ENCODE measurements at regions of chr6 and their contacts with region 1.

Region 1: DNA sequence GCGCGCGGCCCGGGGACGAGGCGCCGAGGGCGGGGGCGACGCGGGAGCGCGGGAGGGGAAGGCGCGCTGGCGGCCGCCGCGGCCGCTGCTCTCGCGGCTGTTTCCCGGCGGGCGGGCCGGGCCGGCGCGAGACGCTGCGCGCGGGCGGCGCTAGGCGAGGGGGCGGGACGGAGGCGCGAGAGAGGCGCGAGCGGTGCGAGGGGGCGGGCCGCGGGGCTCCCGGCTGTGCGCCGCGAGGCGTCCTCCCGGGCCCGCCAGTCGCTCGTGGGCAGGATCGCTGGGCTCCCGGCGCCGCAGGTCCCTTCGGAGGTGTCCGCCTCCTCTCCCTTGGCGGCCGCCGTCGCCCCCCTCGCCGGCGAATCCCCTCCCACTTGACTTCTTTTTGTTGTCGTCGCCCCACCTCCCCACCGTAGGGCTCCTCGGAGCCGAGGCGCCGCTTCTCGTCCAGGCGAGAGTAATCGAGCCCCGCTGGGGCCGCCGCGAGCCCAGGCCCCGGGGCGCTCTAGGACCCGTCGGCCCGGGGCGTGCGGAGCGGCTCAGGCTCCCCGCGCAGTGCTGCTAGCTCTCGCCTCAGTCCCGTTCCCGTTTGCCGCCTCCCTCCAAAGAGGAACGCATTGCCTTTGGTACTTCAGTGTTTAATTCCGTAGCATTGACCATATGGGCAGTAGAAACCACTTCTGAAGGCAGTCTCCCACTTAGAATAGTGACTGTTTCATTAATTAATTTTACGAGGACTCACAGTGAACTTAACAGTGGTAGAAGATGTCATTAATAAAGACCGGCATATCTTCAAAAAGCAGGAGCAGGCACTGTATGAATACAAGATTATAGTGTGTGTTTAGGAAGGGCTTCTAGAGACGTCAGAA is at the start of gene RANBP9:
- DNase-seq: peak; percentile 84

Region 2: DNA sequence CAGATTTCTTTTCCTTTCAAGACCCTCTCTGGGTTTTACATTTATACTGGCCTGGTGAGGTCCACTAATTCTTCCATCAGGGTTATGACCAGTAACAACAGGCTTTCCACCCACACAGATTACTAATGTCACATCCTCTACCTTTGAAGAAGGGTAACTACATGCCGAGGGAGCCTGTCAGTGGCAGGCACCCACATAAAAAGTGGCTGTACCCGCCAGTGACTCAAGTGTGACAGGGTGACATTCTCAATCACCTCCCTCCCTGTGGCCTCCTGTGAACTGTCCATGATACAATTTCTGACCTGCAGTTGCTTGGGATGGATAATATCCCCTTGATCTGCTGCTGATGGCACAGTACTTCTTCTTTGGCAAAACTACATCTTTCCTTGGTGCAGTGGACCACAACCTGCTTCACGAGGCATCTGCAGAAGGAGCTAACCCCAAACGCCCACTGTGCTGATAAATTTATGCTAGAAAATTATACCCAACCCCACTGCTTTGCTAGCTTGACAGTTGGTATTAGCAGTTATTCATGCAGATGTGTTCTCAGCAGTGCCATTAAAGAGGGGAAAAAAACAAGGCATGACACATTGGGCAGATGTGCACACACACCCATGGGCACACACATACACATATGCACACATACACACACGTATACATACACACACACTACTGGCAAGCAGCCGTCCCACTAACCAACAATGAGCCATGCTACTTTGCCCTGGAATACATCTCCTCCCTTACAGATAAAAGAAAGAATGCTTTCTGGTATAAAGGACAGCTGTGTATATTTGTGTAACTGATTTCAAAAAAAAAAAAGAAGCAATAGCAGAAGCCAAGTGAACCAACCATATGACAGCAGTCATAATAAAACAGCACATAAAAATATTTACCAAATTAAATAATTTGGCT is 245.4 kb before region 1 on chr6:
- CTCF ChIA-PET with region 1: no interaction called
- POLR2A ChIA-PET with region 1: no interaction called
- DNase-seq: no peak

Region 3: GRCh38 chr6:13624871-13625288 is 87.1 kb before region 1 on chr6:
- CTCF ChIA-PET with region 1: interaction called, 12 read pairs
- POLR2A ChIA-PET with region 1: interaction called, 4 read pairs
- DNase-seq: peak; percentile 58